Naive thymus-derived CD4-positive, alpha-beta T cell (primary cell): ENCODE measurements at regions of chr10 and their contacts with region 1.

Region 1: DNA sequence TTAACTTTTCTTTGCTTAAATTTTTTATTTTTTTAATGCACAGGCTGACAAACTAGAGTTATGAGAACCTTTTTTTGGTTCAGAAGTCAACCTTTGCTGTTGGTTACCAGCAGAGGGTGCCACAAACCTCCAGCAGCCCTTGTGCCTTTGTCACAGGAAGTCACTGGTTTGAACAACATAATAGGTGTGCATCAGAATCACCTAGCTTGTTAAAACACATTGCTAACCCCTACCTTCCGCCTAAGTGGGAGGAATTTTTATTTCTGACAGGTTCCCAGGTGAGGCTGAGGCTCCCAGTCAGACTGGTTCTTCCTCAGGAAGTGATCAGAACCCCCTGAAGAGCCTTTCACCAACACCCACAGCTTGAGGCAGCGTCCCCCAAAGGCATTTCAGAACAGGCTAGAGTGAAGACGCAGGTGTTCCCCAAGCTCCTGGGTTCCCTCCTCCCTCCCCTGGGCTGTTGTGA is 22.6 kb upstream of the VDAC2 start:
- DNase-seq: peak; percentile 33 to 84 (median 77)
- ATAC-seq: peak; percentile 94
- H3K4me3 ChIP-seq: no peak overlapping the region
- H3K4me3 Mint-ChIP-seq: peak overlapping the region in 1 of 10 donors; percentile 11
- H3K27ac ChIP-seq: peak overlapping the region; percentile 59
- H3K27ac Mint-ChIP-seq: peak overlapping the region; percentile 58 to 98 (median 90)
- H3K4me1 ChIP-seq: peaks cover 4 to 5% of the 10 kb centered on the region in 2 donors
- H3K4me1 Mint-ChIP-seq: peaks cover 0 to 12% (median 7%) of the 10 kb centered on the region in 7 donors
- H3K27me3 ChIP-seq: no peaks in the 10 kb centered on the region
- H3K27me3 Mint-ChIP-seq: no peaks in the 10 kb centered on the region

Region 2: GRCh38 chr10:75145590-75145989 is 42.4 kb before region 1 on chr10:
- CTCF ChIA-PET with region 1: no interaction called
- POLR2A ChIA-PET with region 1: no interaction called
- intact Hi-C with region 1: no loop called
- DNase-seq: peak in 4 of 9 donors; percentile 9 to 22 (median 15)
- ATAC-seq: no peak
- H3K4me3 ChIP-seq: no peak overlapping the region
- H3K4me3 Mint-ChIP-seq: peak overlapping the region in 9 of 10 donors; percentile 5 to 69 (median 21)
- H3K27ac ChIP-seq: no peak overlapping the region
- H3K27ac Mint-ChIP-seq: peak overlapping the region in 8 of 9 donors; percentile 0 to 78 (median 30)
- H3K4me1 ChIP-seq: peaks cover 0 to 12% of the 10 kb centered on the region in 2 donors
- H3K4me1 Mint-ChIP-seq: peaks cover 23 to 72% (median 36%) of the 10 kb centered on the region in 7 donors
- H3K27me3 ChIP-seq: no peaks in the 10 kb centered on the region
- H3K27me3 Mint-ChIP-seq: no peaks in the 10 kb centered on the region

Region 3: DNA sequence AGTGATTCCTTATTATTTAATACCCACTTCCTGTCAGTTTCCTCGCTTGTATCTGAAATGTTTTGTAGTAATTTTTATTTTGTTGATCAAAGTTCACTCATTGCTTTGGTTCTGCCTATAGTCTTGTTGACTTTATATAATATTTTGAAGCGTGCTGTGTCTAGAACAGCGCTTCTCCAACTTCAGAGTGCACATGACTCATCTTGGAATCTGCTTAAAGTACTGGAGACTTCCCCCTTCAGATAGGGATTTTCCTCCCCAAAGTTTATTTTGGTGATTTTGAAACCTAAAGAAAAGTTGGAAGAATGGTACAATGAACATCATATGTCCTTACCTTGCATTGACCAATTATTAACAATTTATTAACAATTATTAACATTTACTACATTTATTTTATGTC is 42.0 kb after region 1 on chr10:
- CTCF ChIA-PET with region 1: interaction called, 183 read pairs
- POLR2A ChIA-PET with region 1: interaction called, 8 read pairs
- intact Hi-C with region 1: loop called (anchors 1 kb)
- DNase-seq: no peak
- ATAC-seq: no peak
- H3K4me3 ChIP-seq: no peak overlapping the region
- H3K4me3 Mint-ChIP-seq: no peak overlapping the region
- H3K27ac ChIP-seq: peak overlapping the region; percentile 52
- H3K27ac Mint-ChIP-seq: peak overlapping the region in 8 of 9 donors; percentile 49 to 97 (median 88)
- H3K4me1 ChIP-seq: peaks cover 5 to 8% of the 10 kb centered on the region in 2 donors
- H3K4me1 Mint-ChIP-seq: peaks cover 17 to 52% (median 41%) of the 10 kb centered on the region in 7 donors
- H3K27me3 ChIP-seq: no peaks in the 10 kb centered on the region
- H3K27me3 Mint-ChIP-seq: no peaks in the 10 kb centered on the region

Region 4: GRCh38 chr10:75245491-75246250 is 57.7 kb after region 1 on chr10:
- CTCF ChIA-PET with region 1: no interaction called
- POLR2A ChIA-PET with region 1: no interaction called
- intact Hi-C with region 1: no loop called
- DNase-seq: peak in 1 of 9 donors; percentile 11
- ATAC-seq: no peak
- H3K4me3 ChIP-seq: no peak overlapping the region
- H3K4me3 Mint-ChIP-seq: no peak overlapping the region
- H3K27ac ChIP-seq: no peak overlapping the region
- H3K27ac Mint-ChIP-seq: no peak overlapping the region
- H3K4me1 ChIP-seq: no peaks in the 10 kb centered on the region
- H3K4me1 Mint-ChIP-seq: no peaks in the 10 kb centered on the region
- H3K27me3 ChIP-seq: no peaks in the 10 kb centered on the region
- H3K27me3 Mint-ChIP-seq: peaks cover 0 to 7% (median 0%) of the 10 kb centered on the region in 5 donors